ENCODE measurements at regions of chr5 and their contacts with region 1.

Region 1: GRCh38 chr5:317086-317811 is 4.3 kb upstream of the AHRR start:
- DNase-seq: peak; percentile 86

Region 2: DNA sequence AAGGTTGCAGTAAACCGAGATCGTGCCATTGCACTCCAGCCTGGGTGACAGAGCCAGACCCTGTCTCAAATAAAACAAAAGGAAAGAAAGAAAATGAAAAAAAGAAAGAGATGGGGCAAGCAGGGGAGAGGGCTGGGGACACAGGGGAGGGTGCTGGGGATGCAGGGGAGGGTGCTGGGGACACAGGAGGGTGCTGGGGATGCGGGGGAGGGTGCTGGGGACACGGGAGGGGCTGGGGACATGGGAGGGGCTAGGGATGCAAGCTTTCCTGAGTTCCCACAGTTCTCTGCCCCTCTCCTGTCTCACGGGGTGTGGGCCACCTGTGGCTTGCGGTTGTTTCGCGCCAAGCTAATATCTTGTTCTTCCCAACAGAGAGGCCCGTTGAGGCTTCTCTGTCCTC is 38.6 kb before region 1 on chr5:
- CTCF ChIA-PET with region 1: no interaction called
- POLR2A ChIA-PET with region 1: no interaction called
- DNase-seq: no peak

Region 3: DNA sequence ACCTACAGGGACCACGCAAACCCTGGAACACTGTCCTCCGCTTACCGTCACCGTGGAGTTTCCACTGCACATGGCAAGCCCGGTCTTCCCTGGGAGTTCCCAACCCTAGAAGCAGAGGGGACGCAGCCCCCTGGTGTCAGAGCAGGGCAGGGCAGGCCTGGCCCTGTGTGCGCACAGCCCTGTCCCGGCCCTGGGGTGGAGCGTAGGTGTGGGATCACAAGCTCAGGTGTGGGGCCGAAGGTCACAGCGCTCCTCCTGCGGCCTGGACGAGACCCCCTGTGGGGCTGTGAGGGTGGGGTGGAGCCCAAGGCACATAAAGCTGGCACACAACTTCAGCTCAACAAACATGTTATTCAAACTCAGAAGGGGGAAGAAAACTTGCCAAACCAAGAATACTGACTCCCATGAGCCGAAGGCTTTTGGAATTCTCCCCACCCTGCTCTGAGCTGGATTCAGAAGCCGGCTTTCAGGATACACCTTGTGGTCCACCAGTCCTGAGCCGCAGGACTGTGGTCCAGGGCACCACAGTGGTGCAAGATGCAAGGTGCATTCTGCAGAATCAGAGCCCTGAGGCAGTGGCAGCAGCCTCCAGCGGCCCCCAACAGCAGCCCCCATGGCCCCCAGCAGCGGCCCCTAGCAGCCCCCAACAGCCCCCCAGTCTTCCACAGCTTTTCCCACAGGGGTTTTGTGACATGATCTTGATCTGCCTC is 113.9 kb after region 1 on chr5:
- CTCF ChIA-PET with region 1: interaction called, 16 read pairs
- POLR2A ChIA-PET with region 1: interaction called, 6 read pairs
- DNase-seq: peak; percentile 81

Region 4: GRCh38 chr5:442335-443238 is 125.3 kb after region 1 on chr5 and contains the start of gene EXOC3:
- CTCF ChIA-PET with region 1: interaction called, 18 read pairs
- POLR2A ChIA-PET with region 1: interaction called, 3 read pairs
- DNase-seq: peak; percentile 94

Region 5: GRCh38 chr5:607541-608428 is 290.5 kb after region 1 on chr5:
- CTCF ChIA-PET with region 1: no interaction called
- POLR2A ChIA-PET with region 1: no interaction called
- DNase-seq: no peak

Measured in HEK293T (cell line).